ENCODE measurements at regions of chr5 and their contacts with region 1.

Region 1: GRCh38 chr5:39424736-39425637 is at the start of gene DAB2:
- DNase-seq: peak; percentile 87
- ATAC-seq: peak; percentile 92 to 93
- H3K4me3 ChIP-seq: peak within 1 kb of the TSS; percentile 54
- H3K27ac ChIP-seq: peak within 1 kb of the TSS; percentile 70 to 87
- H3K4me1 ChIP-seq: peaks cover 53% of the 10 kb centered on the region
- CTCF ChIP-seq: peak; percentile 67
- EP300 ChIP-seq: peak in 1 of 2 experiments; percentile 16; a peak in 1 of 5 replicates
- POLR2A ChIP-seq: peak; percentile 35; the same call in 1 of the 2 replicates
- RAD21 ChIP-seq: peak; percentile 48 to 73
- polyA plus RNA-seq, gene DAB2: 14.4 and 17.1 TPM in 2 replicates

Region 2: GRCh38 chr5:39049315-39049714 is 375.7 kb before region 1 on chr5:
- CTCF ChIA-PET with region 1: no interaction called
- POLR2A ChIA-PET with region 1: no interaction called
- DNase-seq: no peak
- ATAC-seq: no peak
- H3K4me3 ChIP-seq: no peak overlapping the region
- H3K27ac ChIP-seq: no peak overlapping the region
- H3K4me1 ChIP-seq: 0 out of 3 replicates have a peak, but pooled peaks cover 3% of the 10 kb centered on the region
- CTCF ChIP-seq: no peak
- EP300 ChIP-seq: no peak
- POLR2A ChIP-seq: no peak
- RAD21 ChIP-seq: no peak

Region 3: GRCh38 chr5:39376293-39376714 is 48.7 kb before region 1 on chr5:
- CTCF ChIA-PET with region 1: interaction called, 45 read pairs
- POLR2A ChIA-PET with region 1: interaction called, 4 read pairs
- DNase-seq: peak; percentile 65 to 67
- ATAC-seq: peak; percentile 85 to 95; a peak in 5 of 6 replicates
- H3K4me3 ChIP-seq: no peak overlapping the region
- H3K27ac ChIP-seq: no peak overlapping the region; a peak in 1 of 6 replicates
- H3K4me1 ChIP-seq: no peaks in the 10 kb centered on the region
- CTCF ChIP-seq: peak; percentile 95
- EP300 ChIP-seq: no peak
- POLR2A ChIP-seq: no peak
- RAD21 ChIP-seq: peak; percentile 96 to 97

Region 4: GRCh38 chr5:39405083-39405843 is 19.7 kb before region 1 on chr5:
- CTCF ChIA-PET with region 1: interaction called, 33 read pairs
- POLR2A ChIA-PET with region 1: interaction called, 25 read pairs
- DNase-seq: no peak
- ATAC-seq: peak in 1 of 2 experiments; percentile 53; a peak in 4 of 6 replicates
- H3K4me3 ChIP-seq: no peak overlapping the region
- H3K27ac ChIP-seq: no peak overlapping the region
- H3K4me1 ChIP-seq: peaks cover 22% of the 10 kb centered on the region
- CTCF ChIP-seq: no peak
- EP300 ChIP-seq: no peak
- POLR2A ChIP-seq: no peak
- RAD21 ChIP-seq: no peak

Region 5: GRCh38 chr5:39437469-39437868 is 12.5 kb after region 1 on chr5:
- CTCF ChIA-PET with region 1: interaction called, 23 read pairs
- POLR2A ChIA-PET with region 1: interaction called, 4 read pairs
- DNase-seq: peak in 1 of 2 experiments; percentile 62
- ATAC-seq: peak; percentile 71 to 72; a peak in 4 of 6 replicates
- H3K4me3 ChIP-seq: no peak overlapping the region
- H3K27ac ChIP-seq: peak overlapping the region; percentile 50 to 57; a peak in 5 of 6 replicates
- H3K4me1 ChIP-seq: peaks cover 34% of the 10 kb centered on the region; the same call in 2 of the 3 replicates
- CTCF ChIP-seq: no peak
- EP300 ChIP-seq: no peak
- POLR2A ChIP-seq: no peak
- RAD21 ChIP-seq: no peak

Region 6: DNA sequence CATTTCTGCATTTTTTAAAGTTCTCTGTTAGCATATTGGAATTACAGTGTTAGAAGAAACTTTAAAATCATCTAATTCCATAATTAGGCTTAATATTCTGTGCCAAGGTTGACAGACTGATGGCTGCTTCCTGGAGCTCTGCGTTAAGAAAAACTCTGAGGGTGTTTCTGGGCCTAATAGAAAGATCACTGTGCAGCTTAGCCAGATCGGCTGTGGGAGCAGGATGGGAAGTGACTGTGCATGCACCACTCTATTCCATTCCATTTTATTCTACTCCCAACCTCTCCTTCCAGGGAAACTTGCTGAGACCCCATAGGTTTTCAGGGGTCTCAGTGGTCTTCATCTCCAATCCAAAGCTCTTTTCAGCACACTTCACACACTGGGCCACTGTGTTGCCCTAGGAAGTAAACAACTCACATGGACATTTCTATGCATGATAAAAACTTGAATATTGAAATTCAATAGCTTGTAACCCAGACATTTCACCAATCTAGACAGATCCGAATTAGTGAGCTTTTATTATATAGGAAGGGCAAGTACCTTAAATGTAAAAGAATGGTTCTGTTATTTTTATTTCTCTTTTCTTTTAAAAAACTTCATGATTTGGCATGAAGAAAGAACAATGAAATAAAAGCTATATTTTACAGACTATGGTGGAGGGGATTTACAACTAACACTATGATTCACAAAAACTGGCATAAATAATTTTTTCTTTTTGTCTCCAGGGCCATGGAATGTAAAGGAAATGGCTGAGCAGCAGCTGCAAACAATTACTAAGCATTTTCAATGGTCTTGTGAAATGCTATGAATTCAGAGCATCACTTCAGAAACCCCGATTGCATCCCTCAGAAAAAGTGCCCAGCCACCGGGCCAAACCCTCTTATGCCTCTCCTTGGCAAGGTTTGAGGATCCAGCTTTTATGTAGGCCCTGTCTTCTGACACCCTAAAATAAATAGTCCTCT is 51.2 kb after region 1 on chr5:
- CTCF ChIA-PET with region 1: interaction called, 3 read pairs
- POLR2A ChIA-PET with region 1: interaction called, 10 read pairs
- DNase-seq: no peak
- ATAC-seq: no peak
- H3K4me3 ChIP-seq: no peak overlapping the region
- H3K27ac ChIP-seq: peak overlapping the region in 1 of 2 experiments; percentile 62; a peak in 3 of 6 replicates
- H3K4me1 ChIP-seq: peaks cover 8% of the 10 kb centered on the region; the same call in 2 of the 3 replicates
- CTCF ChIP-seq: no peak
- EP300 ChIP-seq: no peak
- POLR2A ChIP-seq: no peak
- RAD21 ChIP-seq: no peak

Region 7: GRCh38 chr5:39547553-39548154 is 122.7 kb after region 1 on chr5:
- CTCF ChIA-PET with region 1: interaction called, 42 read pairs
- POLR2A ChIA-PET with region 1: interaction called, 22 read pairs
- DNase-seq: peak; percentile 49 to 56
- ATAC-seq: peak in 1 of 2 experiments; percentile 83; a peak in 3 of 6 replicates
- H3K4me3 ChIP-seq: no peak overlapping the region
- H3K27ac ChIP-seq: peak overlapping the region; percentile 19 to 46; a peak in 4 of 6 replicates
- H3K4me1 ChIP-seq: peaks cover 15% of the 10 kb centered on the region; the same call in 2 of the 3 replicates
- CTCF ChIP-seq: peak; percentile 88
- EP300 ChIP-seq: no peak
- POLR2A ChIP-seq: no peak
- RAD21 ChIP-seq: peak; percentile 92 to 94